ENCODE measurements at regions of chr5 and their contacts with region 1.

Region 1: DNA sequence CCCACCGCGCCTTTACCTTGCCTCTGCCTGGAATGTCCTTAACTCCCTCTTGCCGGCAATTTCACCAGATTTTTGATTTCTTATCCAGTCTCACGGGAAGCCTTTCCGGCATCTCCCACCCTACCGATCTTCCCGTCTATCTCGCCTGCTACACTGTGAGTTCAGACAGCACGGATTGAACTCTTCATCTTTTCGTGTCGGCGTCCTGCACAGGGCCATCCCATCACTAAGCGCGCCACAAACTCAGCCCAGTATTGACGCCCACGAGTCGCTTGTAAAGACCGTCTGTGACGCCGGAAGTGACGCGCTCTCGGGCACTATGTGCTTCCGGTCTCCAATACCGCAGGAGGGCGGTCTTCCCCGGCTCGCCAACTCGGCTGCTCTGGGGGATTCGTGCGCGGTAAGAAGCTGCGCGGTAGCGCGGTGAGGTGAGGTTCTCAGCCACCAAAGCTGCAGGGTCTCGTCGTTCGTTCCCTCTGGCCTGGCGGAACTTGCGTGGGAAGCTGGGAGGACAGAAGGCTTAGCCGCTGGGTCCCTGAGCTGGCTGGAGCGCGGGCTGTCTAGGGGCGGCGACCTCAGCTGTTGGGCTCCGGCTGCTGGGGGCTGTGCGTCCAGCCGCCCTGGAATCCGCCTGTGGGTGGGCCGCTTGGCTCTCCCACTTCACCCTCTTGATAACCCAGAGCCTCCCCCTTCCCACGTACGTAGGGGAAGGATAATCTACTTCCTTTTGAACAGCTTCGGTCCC is at the start of gene ZCCHC9:
- DNase-seq: peak; percentile 90
- H3K4me3 Mint-ChIP-seq: peak within 1 kb of the TSS; percentile 92
- H3K27ac Mint-ChIP-seq: peak within 1 kb of the TSS; percentile 95
- H3K4me1 Mint-ChIP-seq: peaks cover 46% of the 10 kb centered on the region
- H3K27me3 Mint-ChIP-seq: no peaks in the 10 kb centered on the region
- total RNA-seq, gene ZCCHC9: 43.4 and 46.9 TPM in 2 replicates

Region 2: GRCh38 chr5:80407735-80408482 is 893.5 kb before region 1 on chr5 and contains the start of gene ZFYVE16:
- intact Hi-C with region 1: loop called (anchors 10 kb)
- DNase-seq: peak; percentile 94
- H3K4me3 Mint-ChIP-seq: peak within 1 kb of the TSS; percentile 95
- H3K27ac Mint-ChIP-seq: peak within 1 kb of the TSS; percentile 99
- H3K4me1 Mint-ChIP-seq: peaks cover 20% of the 10 kb centered on the region
- H3K27me3 Mint-ChIP-seq: no peaks in the 10 kb centered on the region
- total RNA-seq, gene ZFYVE16: 9.0 and 11.4 TPM in 2 replicates

Region 3: DNA sequence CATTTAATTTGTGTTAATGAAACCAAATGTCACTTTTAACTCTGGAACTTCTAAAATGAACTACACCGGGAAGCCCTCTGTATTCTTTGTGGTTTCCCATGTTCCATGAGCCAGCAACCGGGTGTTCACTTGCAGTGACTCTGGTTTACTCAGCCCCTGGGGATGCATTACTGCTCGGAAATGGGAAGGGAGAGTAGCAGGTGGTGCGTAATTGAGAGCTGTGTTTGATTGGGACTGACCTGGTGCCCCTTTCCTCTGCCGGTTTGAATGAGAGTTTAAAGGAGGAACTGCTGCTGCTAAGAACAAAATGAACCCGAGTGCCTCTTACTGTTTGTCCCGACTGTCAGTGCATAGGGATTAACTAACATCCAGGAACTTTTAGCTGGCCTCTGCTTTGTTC is 546.5 kb before region 1 on chr5:
- intact Hi-C with region 1: loop called (anchors 5 kb)
- DNase-seq: no peak
- H3K4me3 Mint-ChIP-seq: peak overlapping the region; percentile 49
- H3K27ac Mint-ChIP-seq: peak overlapping the region; percentile 91
- H3K4me1 Mint-ChIP-seq: peaks cover 62% of the 10 kb centered on the region
- H3K27me3 Mint-ChIP-seq: no peaks in the 10 kb centered on the region

Region 4: GRCh38 chr5:81288021-81288433 is 13.4 kb before region 1 on chr5:
- intact Hi-C with region 1: loop called (anchors 1 kb)
- DNase-seq: no peak
- H3K4me3 Mint-ChIP-seq: no peak overlapping the region
- H3K27ac Mint-ChIP-seq: no peak overlapping the region
- H3K4me1 Mint-ChIP-seq: peaks cover 51% of the 10 kb centered on the region
- H3K27me3 Mint-ChIP-seq: peaks cover 2% of the 10 kb centered on the region

Region 5: GRCh38 chr5:81751009-81751835 is 449.8 kb after region 1 on chr5 and contains the start of gene SSBP2:
- intact Hi-C with region 1: loop called (anchors 5 kb)
- DNase-seq: peak; percentile 99
- H3K4me3 Mint-ChIP-seq: peak within 1 kb of the TSS; percentile 92
- H3K27ac Mint-ChIP-seq: peak within 1 kb of the TSS; percentile 93
- H3K4me1 Mint-ChIP-seq: peaks cover 30% of the 10 kb centered on the region
- H3K27me3 Mint-ChIP-seq: peaks cover 15% of the 10 kb centered on the region
- total RNA-seq, gene SSBP2: 24.3 and 29.5 TPM in 2 replicates

Measured in activated T-helper 2 cell treated with anti-CD3 and anti-CD28 coated beads, Interferon-gamma antibody, Interleukin-2, Interleukin-4, amounts not matched to agents 10 μg/mL and 5 μg/mL and 100 μg/mL, durations not matched to agents 14 hours and 24 hours and 36 hours (primary cell).